ENCODE measurements at regions of chrX and their contacts with region 1.

Region 1: DNA sequence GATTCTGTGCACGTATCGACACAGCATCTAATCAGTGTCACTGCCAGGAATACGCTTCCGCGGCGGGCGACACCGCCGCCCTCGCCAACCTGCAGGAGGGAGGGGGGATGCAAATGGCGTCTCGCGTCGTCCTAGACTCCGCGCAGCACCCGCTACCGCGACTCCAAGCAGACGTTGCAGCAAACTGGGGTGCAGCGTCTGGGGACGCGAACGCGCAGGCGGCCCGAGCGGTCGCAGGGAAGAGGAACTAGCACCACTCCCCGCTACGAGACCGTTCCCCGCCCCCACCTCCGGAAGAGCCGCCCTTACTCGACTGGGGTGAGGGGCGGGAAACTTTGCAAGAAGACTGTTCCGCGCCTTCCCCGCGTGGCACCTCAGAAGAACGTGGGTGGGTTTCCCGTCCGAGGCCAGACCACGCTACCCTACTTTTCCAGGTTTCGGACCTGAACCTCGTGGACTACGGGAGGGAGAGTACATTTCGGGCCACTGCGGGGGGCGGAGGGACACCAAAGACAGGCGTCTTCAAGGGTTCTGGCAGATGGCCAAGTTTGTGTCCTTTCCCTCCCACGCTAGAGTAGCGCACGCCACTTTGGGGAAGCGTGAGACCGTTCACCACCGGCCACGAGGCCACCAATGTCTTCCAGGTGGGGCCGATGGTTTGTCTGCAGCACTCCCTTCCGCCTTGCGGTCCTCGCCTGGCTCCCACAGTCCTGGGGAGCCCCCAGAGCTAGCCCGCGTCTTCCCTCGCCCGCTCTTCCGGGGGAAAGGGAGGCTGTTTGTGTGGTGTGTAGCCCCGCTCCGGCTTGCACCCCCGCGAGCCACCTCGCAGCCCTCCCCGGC is 78.0 kb upstream of the BCOR start:
- DNase-seq: peak; percentile 54 to 92 (median 76)
- ATAC-seq: peak; percentile 40 to 54
- H3K4me3 Mint-ChIP-seq: peak overlapping the region; percentile 88 to 94 (median 91)
- H3K27ac Mint-ChIP-seq: peak overlapping the region; percentile 96 to 100 (median 99)
- H3K4me1 Mint-ChIP-seq: peaks cover 15 to 49% (median 34%) of the 10 kb centered on the region in 4 donors
- H3K27me3 Mint-ChIP-seq: no peaks in the 10 kb centered on the region

Region 2: DNA sequence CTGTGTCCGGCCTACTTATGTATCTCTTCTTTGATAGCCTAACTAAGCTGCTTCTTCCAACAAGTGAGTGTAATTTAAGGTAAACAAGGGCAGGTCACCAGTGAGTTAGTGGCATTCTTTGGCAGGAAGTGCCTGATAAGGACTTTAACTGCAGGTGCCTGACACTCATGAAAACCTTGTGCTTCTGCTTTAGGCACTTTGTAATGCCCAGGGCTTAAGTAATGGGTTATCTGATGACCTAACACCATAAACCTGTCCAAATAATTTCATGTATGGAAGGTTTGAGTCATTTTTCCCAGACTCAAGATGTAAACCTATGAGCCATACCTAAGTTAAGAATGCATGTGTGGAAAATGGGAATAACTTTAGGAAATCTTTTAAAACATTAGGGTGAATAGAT is 120.9 kb before region 1 on chrX:
- POLR2A ChIA-PET with region 1: no interaction called
- DNase-seq: no peak
- ATAC-seq: no peak
- H3K4me3 Mint-ChIP-seq: no peak overlapping the region
- H3K27ac Mint-ChIP-seq: peak overlapping the region in 1 of 10 donors; percentile 27
- H3K4me1 Mint-ChIP-seq: peaks cover 0 to 6% (median 0%) of the 10 kb centered on the region in 4 donors
- H3K27me3 Mint-ChIP-seq: no peaks in the 10 kb centered on the region

Region 3: DNA sequence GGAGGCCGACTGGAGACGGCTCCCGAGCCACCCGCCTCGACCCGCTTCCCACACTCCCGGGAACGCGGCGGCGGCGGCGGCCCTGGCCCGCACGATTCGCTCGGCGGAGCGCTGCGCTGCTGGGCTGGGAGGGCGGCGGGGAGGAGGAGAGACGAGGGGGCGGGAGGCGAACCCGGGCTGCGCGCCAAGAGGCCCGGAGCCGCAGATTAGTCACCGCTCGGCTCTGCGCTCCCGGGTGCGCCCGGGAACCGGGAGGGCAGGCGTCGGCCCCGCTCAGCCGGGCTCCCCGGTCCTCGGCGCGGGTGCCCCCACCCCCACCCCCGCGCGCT is 66.8 kb before region 1 on chrX:
- POLR2A ChIA-PET with region 1: interaction called, 19 read pairs
- DNase-seq: peak in 9 of 10 donors; percentile 26 to 76 (median 53)
- ATAC-seq: peak; percentile 50 to 61
- H3K4me3 Mint-ChIP-seq: peak overlapping the region in 7 of 10 donors; percentile 45 to 72 (median 60)
- H3K27ac Mint-ChIP-seq: no peak overlapping the region
- H3K4me1 Mint-ChIP-seq: peaks cover 4 to 19% (median 13%) of the 10 kb centered on the region in 4 donors
- H3K27me3 Mint-ChIP-seq: no peaks in the 10 kb centered on the region

Region 4: DNA sequence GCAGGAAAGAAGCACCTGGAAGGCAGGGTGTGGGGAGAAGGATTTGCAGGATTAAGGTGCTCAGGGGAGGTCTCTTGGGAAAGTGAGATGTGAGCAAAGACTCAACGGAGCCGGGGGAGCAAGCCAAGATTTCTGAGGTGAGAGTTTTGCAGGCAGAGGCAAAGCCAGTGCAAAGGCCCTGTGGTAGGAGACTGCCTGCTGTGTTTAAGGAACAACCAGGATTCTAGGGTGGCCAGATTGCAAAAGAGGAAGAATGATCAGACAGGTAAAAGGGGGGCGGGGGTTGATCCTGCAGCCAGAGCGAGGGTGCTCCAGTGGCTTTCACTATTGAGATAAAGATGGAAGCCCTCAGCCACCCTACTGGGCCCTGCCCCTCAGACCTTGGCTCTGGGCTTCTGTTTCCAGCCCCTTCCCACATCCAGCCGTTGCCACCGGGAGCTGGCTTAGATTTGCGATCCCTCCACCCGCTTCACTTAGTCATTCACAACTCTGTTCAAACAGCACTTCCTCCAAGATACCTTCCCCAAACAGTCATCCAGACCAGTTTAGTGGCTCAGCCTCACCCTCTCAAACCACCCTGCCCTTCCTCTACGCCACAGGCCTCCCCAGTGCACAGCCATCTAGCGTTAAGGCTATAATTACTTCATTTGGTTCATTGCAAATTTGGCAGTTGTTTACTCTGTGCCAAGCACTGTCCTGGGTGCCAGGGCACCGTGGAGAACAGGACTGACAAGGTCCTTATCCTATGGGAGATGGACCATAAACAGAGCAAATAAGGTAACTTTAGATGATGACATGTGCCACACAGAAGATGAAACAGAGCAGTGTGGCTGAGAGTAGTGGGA is 54.7 kb before region 1 on chrX:
- POLR2A ChIA-PET with region 1: no interaction called
- DNase-seq: no peak
- ATAC-seq: no peak
- H3K4me3 Mint-ChIP-seq: no peak overlapping the region
- H3K27ac Mint-ChIP-seq: peak overlapping the region in 5 of 10 donors; percentile 2 to 50 (median 24)
- H3K4me1 Mint-ChIP-seq: peaks cover 0 to 5% (median 1%) of the 10 kb centered on the region in 4 donors
- H3K27me3 Mint-ChIP-seq: no peaks in the 10 kb centered on the region

Region 5: DNA sequence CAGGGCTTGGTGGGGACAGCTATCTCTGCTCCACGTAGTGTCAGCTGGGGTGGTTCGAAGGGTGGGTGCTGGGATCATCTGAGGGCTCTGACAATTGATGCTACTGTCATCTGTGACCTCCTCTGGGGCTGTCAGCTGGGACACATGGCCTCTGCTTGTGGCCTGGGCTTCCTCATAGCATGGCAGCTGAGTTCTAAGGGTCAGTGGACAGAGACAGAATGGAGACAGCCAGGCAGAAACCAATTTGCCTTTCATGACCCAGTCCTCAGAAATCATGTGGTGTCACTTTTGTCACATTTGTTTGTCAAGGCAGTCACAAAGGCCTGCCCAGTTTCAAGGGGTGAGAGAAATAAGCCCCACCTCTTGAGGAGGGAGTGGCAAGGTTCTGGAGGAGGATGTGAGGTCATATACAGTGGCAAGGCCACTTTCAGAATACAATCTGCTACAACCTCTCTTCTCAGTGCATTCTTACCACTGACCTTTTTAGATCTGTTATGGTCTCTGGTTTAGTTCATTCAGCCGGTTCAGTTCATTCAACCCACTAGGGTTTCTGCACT is 25.7 kb after region 1 on chrX:
- POLR2A ChIA-PET with region 1: interaction called, 14 read pairs
- DNase-seq: peak in 5 of 10 donors; percentile 9 to 32 (median 20)
- ATAC-seq: peak; percentile 62 to 95
- H3K4me3 Mint-ChIP-seq: peak overlapping the region in 5 of 10 donors; percentile 55 to 62 (median 59)
- H3K27ac Mint-ChIP-seq: peak overlapping the region in 7 of 10 donors; percentile 23 to 86 (median 62)
- H3K4me1 Mint-ChIP-seq: peaks cover 2 to 24% (median 20%) of the 10 kb centered on the region in 4 donors
- H3K27me3 Mint-ChIP-seq: no peaks in the 10 kb centered on the region

Region 6: DNA sequence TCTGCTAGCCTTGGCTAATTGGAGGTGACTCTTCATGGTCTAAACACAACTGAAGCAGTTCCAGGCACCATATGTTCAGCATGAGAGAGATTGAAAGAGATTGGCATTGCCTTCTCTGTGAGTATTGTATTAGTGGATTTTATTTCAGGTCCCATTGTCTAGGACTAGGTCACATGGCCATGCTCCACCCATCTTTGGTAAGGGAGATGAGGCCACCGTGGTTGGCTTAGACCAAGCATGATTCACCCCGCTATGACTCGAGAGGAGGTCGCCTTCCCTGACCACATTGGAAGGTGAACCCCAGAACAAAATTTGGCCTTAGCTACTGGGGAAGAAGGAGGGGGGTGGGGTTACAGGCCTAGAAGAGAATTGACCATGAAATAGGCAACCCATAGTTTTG is 31.9 kb after region 1 on chrX:
- POLR2A ChIA-PET with region 1: interaction called, 14 read pairs
- DNase-seq: peak in 1 of 10 donors; percentile 2
- ATAC-seq: no peak
- H3K4me3 Mint-ChIP-seq: no peak overlapping the region
- H3K27ac Mint-ChIP-seq: peak overlapping the region in 1 of 10 donors; percentile 20
- H3K4me1 Mint-ChIP-seq: peaks cover 2 to 19% (median 10%) of the 10 kb centered on the region in 4 donors
- H3K27me3 Mint-ChIP-seq: no peaks in the 10 kb centered on the region

Region 7: DNA sequence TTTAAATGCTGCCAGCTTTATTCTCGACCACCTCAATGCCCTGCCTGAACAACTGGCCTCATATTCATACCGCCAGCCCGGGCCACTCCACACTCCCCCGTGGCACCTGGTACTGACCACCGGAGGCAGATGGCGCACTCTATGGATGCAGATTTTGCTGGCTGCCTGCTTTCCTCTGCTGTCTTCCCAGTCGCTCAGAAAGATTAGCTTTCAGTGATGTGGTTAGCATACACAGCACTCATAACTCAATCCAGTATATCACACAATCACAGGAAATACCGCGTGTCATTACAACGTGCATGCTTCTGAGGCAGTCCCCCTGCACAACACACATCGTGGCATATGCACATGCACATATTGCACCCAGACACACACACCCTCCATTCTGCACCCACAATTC is 69.2 kb after region 1 on chrX:
- POLR2A ChIA-PET with region 1: interaction called, 10 read pairs
- DNase-seq: peak in 2 of 10 donors; percentile 25 to 26
- ATAC-seq: peak; percentile 53 to 80
- H3K4me3 Mint-ChIP-seq: peak overlapping the region in 8 of 10 donors; percentile 2 to 34 (median 24)
- H3K27ac Mint-ChIP-seq: peak overlapping the region in 2 of 10 donors; percentile 5 to 78
- H3K4me1 Mint-ChIP-seq: peaks cover 9 to 14% (median 11%) of the 10 kb centered on the region in 4 donors
- H3K27me3 Mint-ChIP-seq: peaks cover 0 to 4% (median 0%) of the 10 kb centered on the region in 5 donors

Measured in naive thymus-derived CD8-positive, alpha-beta T cell (primary cell).